B cell (primary cell): ENCODE measurements at regions of chr3 and their contacts with region 1.

Region 1: GRCh38 chr3:187112934-187113793 is 26.1 kb downstream of the RPL39L start:
- DNase-seq: peak; percentile 69
- ATAC-seq: peak; percentile 45
- H3K4me3 ChIP-seq: no peak overlapping the region
- H3K4me3 Mint-ChIP-seq: no peak overlapping the region
- H3K27ac ChIP-seq: no peak overlapping the region
- H3K27ac Mint-ChIP-seq: peak overlapping the region; percentile 42
- H3K4me1 ChIP-seq: peaks cover 3 to 5% of the 10 kb centered on the region in 2 donors
- H3K4me1 Mint-ChIP-seq: peaks cover 6% of the 10 kb centered on the region
- H3K27me3 ChIP-seq: no peaks in the 10 kb centered on the region
- H3K27me3 Mint-ChIP-seq: no peaks in the 10 kb centered on the region
- CTCF ChIP-seq: peak; percentile 88

Region 2: DNA sequence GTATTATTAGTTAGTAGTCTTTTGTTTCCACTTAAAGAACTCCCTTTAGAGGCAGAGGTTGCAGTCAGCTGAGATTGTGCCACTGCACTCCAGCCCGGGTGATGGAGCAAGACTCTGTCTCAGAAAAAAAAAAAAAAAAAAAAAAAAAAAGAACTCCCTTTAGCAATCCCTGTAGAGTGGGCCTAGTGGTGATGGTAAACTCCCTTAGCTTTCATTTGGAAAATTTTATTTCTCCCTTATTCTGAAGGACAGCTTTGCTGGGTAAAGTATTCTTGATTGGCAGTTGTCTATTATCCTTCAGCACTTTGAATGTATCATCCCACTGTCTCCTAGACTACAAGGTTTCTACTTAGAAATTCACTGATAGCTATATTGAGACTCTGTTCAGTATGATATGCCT is 19.8 kb before region 1 on chr3:
- CTCF ChIA-PET with region 1: interaction called, 17 read pairs
- POLR2A ChIA-PET with region 1: interaction called, 4 read pairs
- intact Hi-C with region 1: no loop called
- DNase-seq: no peak
- ATAC-seq: no peak
- H3K4me3 ChIP-seq: no peak overlapping the region
- H3K4me3 Mint-ChIP-seq: no peak overlapping the region
- H3K27ac ChIP-seq: no peak overlapping the region
- H3K27ac Mint-ChIP-seq: no peak overlapping the region
- H3K4me1 ChIP-seq: peaks cover 0 to 3% of the 10 kb centered on the region in 2 donors
- H3K4me1 Mint-ChIP-seq: peaks cover 23% of the 10 kb centered on the region
- H3K27me3 ChIP-seq: no peaks in the 10 kb centered on the region
- H3K27me3 Mint-ChIP-seq: no peaks in the 10 kb centered on the region
- CTCF ChIP-seq: no peak

Region 3: GRCh38 chr3:187125319-187126031 is 12.3 kb after region 1 on chr3:
- CTCF ChIA-PET with region 1: interaction called, 31 read pairs
- POLR2A ChIA-PET with region 1: no interaction called
- intact Hi-C with region 1: no loop called
- DNase-seq: peak; percentile 55
- ATAC-seq: peak; percentile 56
- H3K4me3 ChIP-seq: no peak overlapping the region
- H3K4me3 Mint-ChIP-seq: peak overlapping the region; percentile 5
- H3K27ac ChIP-seq: peak overlapping the region; percentile 1 to 9
- H3K27ac Mint-ChIP-seq: peak overlapping the region; percentile 80
- H3K4me1 ChIP-seq: peaks cover 23 to 26% of the 10 kb centered on the region in 2 donors
- H3K4me1 Mint-ChIP-seq: peaks cover 36% of the 10 kb centered on the region
- H3K27me3 ChIP-seq: no peaks in the 10 kb centered on the region
- H3K27me3 Mint-ChIP-seq: no peaks in the 10 kb centered on the region
- CTCF ChIP-seq: no peak

Region 4: DNA sequence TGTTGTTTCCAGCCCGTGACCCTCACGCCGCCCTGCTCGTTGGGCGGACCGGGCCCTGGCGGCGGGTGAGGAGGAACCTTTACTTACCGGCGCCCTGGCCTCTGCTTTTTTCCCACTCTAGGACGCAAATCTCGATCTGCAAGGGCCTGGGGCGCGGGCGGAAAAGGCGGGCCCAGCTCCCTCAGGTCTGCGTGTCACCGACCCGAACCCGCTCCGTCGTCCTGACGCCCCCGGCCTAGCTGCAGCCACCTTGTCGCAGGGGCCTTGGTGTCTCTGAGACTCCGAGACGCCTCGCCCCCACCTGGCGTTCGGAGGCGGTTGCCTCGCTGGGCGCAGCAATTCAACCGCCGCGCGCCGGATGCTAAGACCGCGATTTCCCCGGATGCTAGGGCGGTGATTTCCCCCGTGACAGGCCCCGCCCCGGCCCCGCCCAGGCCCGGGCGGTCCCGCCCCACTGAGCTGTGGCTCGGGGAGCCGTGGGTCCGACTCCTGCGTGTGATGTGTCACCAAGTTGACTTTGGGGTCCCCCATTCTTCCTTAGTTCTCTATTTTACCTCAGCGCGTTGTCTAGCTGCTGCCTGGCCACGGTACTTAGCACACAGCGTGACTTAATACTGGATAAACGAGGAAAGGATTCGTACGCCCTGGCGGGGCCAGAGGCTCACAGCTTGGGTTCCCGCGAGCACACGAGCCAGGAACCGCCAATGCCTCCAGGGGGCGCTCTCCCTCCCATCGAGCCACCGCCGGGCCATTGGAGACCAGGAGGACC is 26.1 kb after region 1 on chr3 and contains the start of gene RPL39L:
- CTCF ChIA-PET with region 1: interaction called, 97 read pairs
- POLR2A ChIA-PET with region 1: no interaction called
- intact Hi-C with region 1: no loop called
- DNase-seq: peak; percentile 95
- ATAC-seq: peak; percentile 95
- H3K4me3 ChIP-seq: peak within 1 kb of the TSS in 4 of 5 experiments; percentile 49 to 68 (median 58)
- H3K4me3 Mint-ChIP-seq: peak within 1 kb of the TSS; percentile 90
- H3K27ac ChIP-seq: peak within 1 kb of the TSS; percentile 77 to 79
- H3K27ac Mint-ChIP-seq: peak within 1 kb of the TSS; percentile 90
- H3K4me1 ChIP-seq: peaks cover 12 to 14% of the 10 kb centered on the region in 2 donors
- H3K4me1 Mint-ChIP-seq: peaks cover 16% of the 10 kb centered on the region
- H3K27me3 ChIP-seq: no peaks in the 10 kb centered on the region
- H3K27me3 Mint-ChIP-seq: no peaks in the 10 kb centered on the region
- CTCF ChIP-seq: peak; percentile 79
- total RNA-seq, gene RPL39L: 2.0 and 3.1 TPM in 2 replicates

Region 5: DNA sequence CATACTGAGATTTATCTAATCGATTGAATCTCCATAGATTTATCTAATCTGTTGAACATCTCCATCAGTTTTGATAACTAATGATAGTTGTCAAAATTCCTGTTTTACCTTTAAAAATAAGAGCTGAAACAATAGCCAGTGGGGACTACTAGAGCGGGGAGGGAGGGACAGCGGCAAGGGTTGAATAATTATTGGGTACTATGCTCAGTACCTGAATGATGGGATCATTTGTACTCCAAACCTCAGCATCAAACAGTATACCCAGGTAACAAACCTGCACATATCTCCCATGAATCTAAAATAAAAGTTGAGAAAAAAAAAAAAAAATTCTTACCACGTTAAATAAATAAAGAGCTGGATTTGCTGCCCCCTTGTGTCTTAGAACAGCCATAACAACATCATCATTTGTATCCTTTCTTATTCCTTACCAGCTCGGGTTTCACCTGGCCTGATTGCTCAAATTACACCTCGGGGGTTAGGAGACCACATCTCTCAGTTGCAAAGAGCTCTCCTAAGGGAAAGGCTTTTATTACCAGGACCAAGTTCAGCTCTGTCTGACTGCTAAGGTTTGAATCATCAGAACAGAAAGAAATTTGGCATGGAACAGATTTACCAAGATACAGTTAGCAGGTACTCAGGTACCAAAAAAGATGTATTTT is 51.9 kb after region 1 on chr3:
- CTCF ChIA-PET with region 1: interaction called, 223 read pairs
- POLR2A ChIA-PET with region 1: interaction called, 3 read pairs
- intact Hi-C with region 1: loop called (anchors 1 kb)
- DNase-seq: peak; percentile 81
- ATAC-seq: peak; percentile 72
- H3K4me3 ChIP-seq: no peak overlapping the region
- H3K4me3 Mint-ChIP-seq: no peak overlapping the region
- H3K27ac ChIP-seq: no peak overlapping the region
- H3K27ac Mint-ChIP-seq: no peak overlapping the region
- H3K4me1 ChIP-seq: no peaks in the 10 kb centered on the region
- H3K4me1 Mint-ChIP-seq: no peaks in the 10 kb centered on the region
- H3K27me3 ChIP-seq: peaks cover 0 to 6% (median 0%) of the 10 kb centered on the region in 4 experiments
- H3K27me3 Mint-ChIP-seq: peaks cover 23% of the 10 kb centered on the region
- CTCF ChIP-seq: peak; percentile 81